ENCODE measurements at regions of chr20 and their contacts with region 1.

Region 1: DNA sequence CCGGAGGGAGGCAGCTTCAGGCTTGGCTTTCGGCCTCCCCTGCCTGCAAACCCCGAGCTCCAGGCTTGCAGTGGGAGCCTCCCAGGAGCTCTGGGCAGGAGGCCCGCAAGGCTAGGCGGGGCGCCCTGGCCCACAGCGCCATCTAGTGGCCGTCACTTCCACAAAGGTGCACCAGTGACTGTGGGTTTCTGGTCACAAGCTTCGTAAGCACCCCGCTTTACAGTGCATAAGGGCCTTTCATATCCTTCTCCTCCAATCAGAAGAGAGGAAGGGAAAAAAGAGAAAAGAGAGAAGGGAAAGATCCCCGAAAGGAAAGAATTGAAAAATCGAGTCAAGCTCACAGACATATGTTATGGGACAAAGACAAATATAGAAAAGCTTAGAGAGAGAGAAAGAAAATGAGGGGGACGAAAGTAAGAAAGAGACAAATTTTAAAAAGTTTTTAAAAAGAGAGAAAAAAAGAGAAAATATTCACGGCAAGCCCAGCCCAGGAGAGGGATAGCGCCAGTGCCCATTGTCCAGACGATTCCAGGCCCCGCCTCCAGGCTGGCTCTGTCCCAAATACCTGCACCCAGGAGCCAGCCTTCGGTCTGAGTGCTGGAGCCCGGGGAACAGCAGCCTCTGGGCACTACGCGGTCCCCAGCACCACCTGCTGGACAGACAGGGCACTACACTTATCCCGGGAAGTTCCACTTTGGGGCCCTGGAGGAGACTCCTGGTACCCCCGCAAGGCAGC is 207.1 kb downstream of the PREX1 start:
- DNase-seq: peak; percentile 36
- ATAC-seq: peak; percentile 95
- H3K4me3 ChIP-seq: no peak overlapping the region
- H3K27ac ChIP-seq: no peak overlapping the region
- H3K4me1 ChIP-seq: peaks cover 3% of the 10 kb centered on the region; the same call in 1 of the 2 replicates
- H3K27me3 ChIP-seq: no peaks in the 10 kb centered on the region
- CTCF ChIP-seq: peak; percentile 88 to 98 (median 97)
- EP300 ChIP-seq: no peak
- POLR2A ChIP-seq: no peak
- RAD21 ChIP-seq: peak; percentile 98

Region 2: GRCh38 chr20:47725248-47725973 is 895.3 kb before region 1 on chr20:
- CTCF ChIA-PET with region 1: interaction called, 59 read pairs
- POLR2A ChIA-PET with region 1: no interaction called
- RAD21 ChIA-PET with region 1: interaction called, 45 read pairs
- SMC1A ChIA-PET with region 1: interaction called, 21 read pairs
- in situ Hi-C with region 1: loop called (anchors 5 kb)
- intact Hi-C with region 1: loop called (anchors 2 kb)
- DNase-seq: peak; percentile 63
- ATAC-seq: peak; percentile 87
- H3K4me3 ChIP-seq: no peak overlapping the region
- H3K27ac ChIP-seq: no peak overlapping the region
- H3K4me1 ChIP-seq: peaks cover 21% of the 10 kb centered on the region
- H3K27me3 ChIP-seq: no peaks in the 10 kb centered on the region
- CTCF ChIP-seq: peak; percentile 84 to 95 (median 84)
- EP300 ChIP-seq: no peak
- POLR2A ChIP-seq: no peak
- RAD21 ChIP-seq: peak; percentile 85

Region 3: GRCh38 chr20:48339190-48340062 is 281.3 kb before region 1 on chr20:
- CTCF ChIA-PET with region 1: interaction called, 9 read pairs
- POLR2A ChIA-PET with region 1: interaction called, 3 read pairs
- RAD21 ChIA-PET with region 1: interaction called, 15 read pairs
- SMC1A ChIA-PET with region 1: interaction called, 3 read pairs
- in situ Hi-C with region 1: no loop called
- intact Hi-C with region 1: no loop called
- DNase-seq: peak; percentile 63
- ATAC-seq: peak; percentile 76
- H3K4me3 ChIP-seq: no peak overlapping the region
- H3K27ac ChIP-seq: peak overlapping the region; percentile 67
- H3K4me1 ChIP-seq: peaks cover 22% of the 10 kb centered on the region
- H3K27me3 ChIP-seq: no peaks in the 10 kb centered on the region
- CTCF ChIP-seq: no peak
- EP300 ChIP-seq: peak; percentile 46 to 79; a peak in 3 of 4 replicates
- POLR2A ChIP-seq: no peak
- RAD21 ChIP-seq: peak; percentile 6; the same call in 1 of the 2 replicates

Region 4: DNA sequence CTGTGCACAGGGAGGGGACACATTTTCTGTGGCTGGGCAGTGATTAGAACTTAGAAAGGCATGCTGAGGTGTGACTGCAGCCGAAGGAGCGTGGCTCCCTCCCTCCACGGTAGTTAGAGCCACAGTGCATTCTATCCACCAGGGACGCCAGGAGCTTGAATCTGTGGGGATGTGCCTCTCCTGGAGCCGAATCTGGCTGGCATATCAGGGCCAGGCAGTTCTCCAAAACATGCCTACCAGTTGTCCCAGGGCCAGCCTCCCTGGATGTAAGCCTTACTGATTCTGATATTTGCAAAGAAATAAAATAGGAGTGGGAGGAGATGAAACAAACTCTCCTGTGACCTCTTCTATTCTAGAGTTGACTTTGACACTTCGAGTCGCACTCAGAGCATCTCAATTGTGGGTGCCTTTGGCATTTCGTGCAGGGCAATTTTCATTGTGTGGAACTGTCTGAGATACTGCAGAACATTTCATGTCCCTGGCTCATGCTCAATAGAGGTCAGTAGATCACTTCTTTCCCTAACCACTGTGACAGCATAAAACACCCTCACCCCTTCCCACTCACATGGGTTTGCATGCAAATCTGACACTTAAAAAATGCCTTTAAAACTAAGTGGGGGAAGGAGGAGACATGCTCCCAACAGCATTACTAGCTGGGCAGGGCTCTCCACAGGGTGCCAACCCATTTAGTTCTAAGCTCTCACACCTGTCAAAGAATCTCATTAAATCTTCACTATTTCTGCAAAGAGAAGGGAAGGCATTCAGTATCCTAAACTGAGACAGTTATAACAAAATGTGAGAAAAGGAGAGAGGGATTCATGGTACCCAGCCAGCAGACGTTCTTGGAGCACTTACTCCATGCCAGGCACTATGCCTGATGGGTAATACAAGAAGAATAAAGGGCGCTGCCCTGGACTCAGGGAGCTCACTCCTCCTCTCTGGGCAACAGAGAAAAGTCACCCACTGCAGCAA is 171.8 kb before region 1 on chr20:
- CTCF ChIA-PET with region 1: interaction called, 18 read pairs
- POLR2A ChIA-PET with region 1: no interaction called
- RAD21 ChIA-PET with region 1: interaction called, 19 read pairs
- SMC1A ChIA-PET with region 1: interaction called, 5 read pairs
- in situ Hi-C with region 1: no loop called
- intact Hi-C with region 1: no loop called
- DNase-seq: no peak
- ATAC-seq: peak; percentile 44
- H3K4me3 ChIP-seq: no peak overlapping the region
- H3K27ac ChIP-seq: no peak overlapping the region
- H3K4me1 ChIP-seq: no peaks in the 10 kb centered on the region
- H3K27me3 ChIP-seq: peaks cover 3% of the 10 kb centered on the region in 2 experiments; a peak in 3 of 4 replicates
- CTCF ChIP-seq: peak in 1 of 3 experiments; percentile 22; a peak in 3 of 6 replicates
- EP300 ChIP-seq: no peak
- POLR2A ChIP-seq: no peak
- RAD21 ChIP-seq: peak; percentile 61

Region 5: DNA sequence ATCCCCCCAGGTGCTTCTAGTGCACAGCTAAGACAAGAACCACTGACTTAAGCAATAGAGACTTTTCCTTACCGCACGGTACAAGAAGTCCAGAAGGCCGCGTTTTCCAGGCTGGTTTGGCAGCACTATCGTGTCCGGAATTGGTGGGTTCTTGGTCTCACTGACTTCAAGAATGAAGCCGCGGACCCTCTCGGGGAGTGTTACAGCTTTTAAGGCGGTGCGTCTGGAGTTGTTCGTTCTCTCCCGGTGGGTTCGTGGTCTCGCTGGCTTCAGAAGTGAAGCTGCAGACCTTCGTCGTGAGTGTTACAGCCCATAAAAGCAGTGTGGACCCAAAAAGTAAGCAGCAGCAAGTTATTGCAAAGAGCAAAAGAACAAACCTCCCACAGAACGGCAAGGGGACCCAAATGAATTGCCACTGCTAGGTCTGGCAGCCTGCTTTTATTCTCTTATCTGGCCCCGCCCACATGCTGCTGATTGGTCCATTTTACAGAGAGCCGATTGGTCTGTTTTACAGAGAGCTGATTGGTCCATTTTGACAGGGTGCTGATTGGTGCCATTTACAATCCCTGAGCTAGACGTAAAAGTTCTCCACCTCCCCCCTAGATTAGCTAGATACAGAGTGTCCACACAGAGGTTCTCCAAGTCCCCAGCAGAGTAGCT is 57.3 kb before region 1 on chr20:
- CTCF ChIA-PET with region 1: interaction called, 16 read pairs
- POLR2A ChIA-PET with region 1: no interaction called
- RAD21 ChIA-PET with region 1: interaction called, 12 read pairs
- SMC1A ChIA-PET with region 1: interaction called, 4 read pairs
- in situ Hi-C with region 1: no loop called
- intact Hi-C with region 1: loop called (anchors 2 kb)
- DNase-seq: no peak
- ATAC-seq: no peak
- H3K4me3 ChIP-seq: no peak overlapping the region
- H3K27ac ChIP-seq: no peak overlapping the region
- H3K4me1 ChIP-seq: no peaks in the 10 kb centered on the region
- H3K27me3 ChIP-seq: peaks cover 0 to 2% of the 10 kb centered on the region in 2 experiments; a peak in 2 of 4 replicates
- CTCF ChIP-seq: no peak
- EP300 ChIP-seq: no peak
- POLR2A ChIP-seq: no peak
- RAD21 ChIP-seq: no peak

Measured in GM12878 (cell line).